ENCODE measurements at regions of chr17 and their contacts with region 1.

Region 1: DNA sequence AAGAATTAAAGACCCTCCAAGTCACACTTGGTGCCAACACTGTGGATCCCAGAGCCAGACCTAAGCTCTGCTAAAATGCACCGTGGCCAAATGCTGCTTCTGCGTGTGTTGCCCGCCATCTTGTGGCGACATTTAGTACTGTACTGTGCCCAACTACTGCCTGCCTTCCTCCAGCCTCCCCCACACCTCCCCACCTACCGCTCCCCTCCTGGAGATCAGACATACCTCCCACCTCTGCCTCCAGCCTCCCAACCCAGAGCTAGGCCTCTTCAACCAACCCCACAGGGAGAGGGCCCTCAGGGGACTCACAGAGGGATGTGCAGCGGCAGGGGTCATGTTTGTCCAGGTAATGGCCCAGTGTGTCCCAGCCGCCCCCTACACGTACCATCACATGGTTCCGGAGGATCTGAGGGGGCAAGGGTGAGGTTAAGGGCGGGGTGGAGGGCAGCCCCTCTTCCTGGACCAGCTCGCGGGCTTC is 5.5 kb downstream of the GAS2L2 start:
- DNase-seq: peak in 1 of 2 experiments; percentile 68
- H3K4me3 ChIP-seq: no peak overlapping the region
- H3K27ac ChIP-seq: no peak overlapping the region
- H3K4me1 ChIP-seq: no peaks in the 10 kb centered on the region
- H3K27me3 ChIP-seq: peaks cover 44% of the 10 kb centered on the region
- CTCF ChIP-seq: peak; percentile 89

Region 2: DNA sequence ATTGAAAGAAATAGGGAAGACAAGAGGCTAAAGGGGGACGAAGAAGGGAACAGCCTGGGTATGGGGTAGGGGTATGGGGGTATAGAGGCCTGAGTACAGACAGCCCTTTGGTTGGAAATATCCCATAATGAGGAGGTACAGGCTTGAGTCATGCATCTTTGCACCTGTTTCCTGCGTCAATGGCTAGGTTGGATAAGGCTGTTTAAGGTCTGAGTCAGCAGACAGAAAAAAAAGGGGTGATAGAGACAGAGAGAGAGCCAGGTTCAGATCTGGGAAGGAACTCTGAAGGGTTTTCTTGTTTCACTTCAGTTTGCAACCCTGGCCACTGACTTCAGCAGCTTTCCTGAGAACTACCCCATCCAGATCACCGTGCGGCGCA is 617.6 kb before region 1 on chr17:
- CTCF ChIA-PET with region 1: no interaction called
- POLR2A ChIA-PET with region 1: no interaction called
- intact Hi-C with region 1: loop called (anchors 10 kb)
- DNase-seq: no peak
- H3K4me3 ChIP-seq: no peak overlapping the region
- H3K27ac ChIP-seq: no peak overlapping the region
- H3K4me1 ChIP-seq: no peaks in the 10 kb centered on the region
- H3K27me3 ChIP-seq: no peaks in the 10 kb centered on the region
- CTCF ChIP-seq: no peak

Region 3: GRCh38 chr17:35555695-35556094 is 191.9 kb before region 1 on chr17:
- CTCF ChIA-PET with region 1: no interaction called
- POLR2A ChIA-PET with region 1: no interaction called
- intact Hi-C with region 1: loop called (anchors 5 kb)
- DNase-seq: no peak
- H3K4me3 ChIP-seq: no peak overlapping the region
- H3K27ac ChIP-seq: no peak overlapping the region
- H3K4me1 ChIP-seq: no peaks in the 10 kb centered on the region
- H3K27me3 ChIP-seq: peaks cover 37% of the 10 kb centered on the region
- CTCF ChIP-seq: peak; percentile 31

Region 4: GRCh38 chr17:35804658-35805192 is 57.1 kb after region 1 on chr17:
- CTCF ChIA-PET with region 1: no interaction called
- POLR2A ChIA-PET with region 1: no interaction called
- intact Hi-C with region 1: no loop called
- DNase-seq: peak; percentile 46 to 79
- H3K4me3 ChIP-seq: no peak overlapping the region
- H3K27ac ChIP-seq: no peak overlapping the region
- H3K4me1 ChIP-seq: peaks cover 20% of the 10 kb centered on the region
- H3K27me3 ChIP-seq: no peaks in the 10 kb centered on the region
- CTCF ChIP-seq: peak; percentile 83

Region 5: GRCh38 chr17:35841505-35841904 is 93.9 kb after region 1 on chr17:
- CTCF ChIA-PET with region 1: no interaction called
- POLR2A ChIA-PET with region 1: interaction called, 10 read pairs
- intact Hi-C with region 1: no loop called
- DNase-seq: no peak
- H3K4me3 ChIP-seq: no peak overlapping the region
- H3K27ac ChIP-seq: no peak overlapping the region
- H3K4me1 ChIP-seq: no peaks in the 10 kb centered on the region
- H3K27me3 ChIP-seq: no peaks in the 10 kb centered on the region
- CTCF ChIP-seq: no peak

Region 6: DNA sequence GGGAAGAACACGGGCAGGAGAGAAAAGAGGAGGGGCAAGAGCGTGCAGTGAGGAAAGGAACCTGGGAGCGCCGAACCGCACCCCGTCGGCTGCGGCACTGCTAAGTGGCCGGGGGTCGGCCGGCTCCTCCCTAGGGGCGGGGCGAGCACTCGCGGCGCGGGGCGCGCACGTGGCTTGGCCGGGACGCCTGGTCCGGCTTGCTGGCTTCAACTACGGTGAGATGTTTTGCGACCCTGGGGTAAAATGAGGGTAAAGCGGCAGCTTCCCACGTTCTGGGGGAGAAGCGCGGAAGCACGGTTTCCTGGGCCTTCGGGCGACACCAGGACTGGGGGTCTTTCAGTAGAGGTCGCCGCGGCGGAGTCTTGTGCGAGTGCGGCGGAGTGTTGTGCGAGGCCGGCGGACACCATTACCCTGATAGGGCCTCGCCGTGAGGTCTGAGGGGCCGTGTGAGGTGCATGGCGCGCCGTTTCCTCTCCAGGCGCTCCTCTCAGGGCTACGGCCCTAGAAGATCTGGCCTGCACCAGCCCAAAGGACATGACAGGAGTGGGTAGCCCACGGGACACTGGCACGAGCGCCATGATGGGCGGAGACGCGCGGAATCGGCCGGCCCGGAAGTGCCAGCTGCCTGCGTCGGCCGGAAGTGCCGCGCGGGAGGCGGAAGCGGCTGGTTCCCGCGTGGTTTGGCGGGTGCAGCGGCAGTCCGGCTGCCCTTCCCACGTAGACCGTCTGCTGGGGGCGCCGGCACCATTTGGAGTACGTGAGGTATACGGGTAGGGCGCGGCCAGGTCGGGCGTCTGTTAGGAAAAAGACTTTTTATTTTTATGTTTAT is 787.5 kb after region 1 on chr17 and contains the starts of genes MYO19 and PIGW:
- CTCF ChIA-PET with region 1: no interaction called
- POLR2A ChIA-PET with region 1: interaction called, 17 read pairs
- intact Hi-C with region 1: no loop called
- DNase-seq: peak; percentile 82 to 93
- H3K4me3 ChIP-seq: peak within 1 kb of the TSS; percentile 99
- H3K27ac ChIP-seq: peak within 1 kb of the TSS; percentile 91
- H3K4me1 ChIP-seq: peaks cover 15% of the 10 kb centered on the region; the same call in 1 of the 2 replicates
- H3K27me3 ChIP-seq: no peaks in the 10 kb centered on the region
- CTCF ChIP-seq: no peak
- total RNA-seq, gene MYO19: 110 and 115 TPM in 2 replicates
- total RNA-seq, gene PIGW: 6.3 and 8.0 TPM in 2 replicates

Measured in PC-9 (cell line).